ENCODE measurements at regions of chr5 and their contacts with region 1.

Region 1: GRCh38 chr5:82351754-82352145 is 73.6 kb upstream of the RPS23 start:
- DNase-seq: peak; percentile 89
- ATAC-seq: peak; percentile 89
- H3K4me3 ChIP-seq: no peak overlapping the region
- H3K27ac ChIP-seq: no peak overlapping the region
- H3K4me1 ChIP-seq: peaks cover 19% of the 10 kb centered on the region
- H3K27me3 ChIP-seq: no peaks in the 10 kb centered on the region
- CTCF ChIP-seq: peak; percentile 90
- POLR2A ChIP-seq: 0 out of 2 replicates have a peak, but pooled peaks have one; percentile 47
- RAD21 ChIP-seq: peak; percentile 93

Region 2: GRCh38 chr5:81303563-81303962 is 1048.2 kb before region 1 on chr5:
- CTCF ChIA-PET with region 1: no interaction called
- POLR2A ChIA-PET with region 1: no interaction called
- dilution Hi-C with region 1: no loop called
- in situ Hi-C with region 1: no loop called
- intact Hi-C with region 1: no loop called
- DNase-seq: peak; percentile 94
- ATAC-seq: peak; percentile 20
- H3K4me3 ChIP-seq: no peak overlapping the region
- H3K27ac ChIP-seq: no peak overlapping the region
- H3K4me1 ChIP-seq: peaks cover 4% of the 10 kb centered on the region
- H3K27me3 ChIP-seq: no peaks in the 10 kb centered on the region
- CTCF ChIP-seq: no peak
- POLR2A ChIP-seq: no peak
- RAD21 ChIP-seq: no peak

Region 3: DNA sequence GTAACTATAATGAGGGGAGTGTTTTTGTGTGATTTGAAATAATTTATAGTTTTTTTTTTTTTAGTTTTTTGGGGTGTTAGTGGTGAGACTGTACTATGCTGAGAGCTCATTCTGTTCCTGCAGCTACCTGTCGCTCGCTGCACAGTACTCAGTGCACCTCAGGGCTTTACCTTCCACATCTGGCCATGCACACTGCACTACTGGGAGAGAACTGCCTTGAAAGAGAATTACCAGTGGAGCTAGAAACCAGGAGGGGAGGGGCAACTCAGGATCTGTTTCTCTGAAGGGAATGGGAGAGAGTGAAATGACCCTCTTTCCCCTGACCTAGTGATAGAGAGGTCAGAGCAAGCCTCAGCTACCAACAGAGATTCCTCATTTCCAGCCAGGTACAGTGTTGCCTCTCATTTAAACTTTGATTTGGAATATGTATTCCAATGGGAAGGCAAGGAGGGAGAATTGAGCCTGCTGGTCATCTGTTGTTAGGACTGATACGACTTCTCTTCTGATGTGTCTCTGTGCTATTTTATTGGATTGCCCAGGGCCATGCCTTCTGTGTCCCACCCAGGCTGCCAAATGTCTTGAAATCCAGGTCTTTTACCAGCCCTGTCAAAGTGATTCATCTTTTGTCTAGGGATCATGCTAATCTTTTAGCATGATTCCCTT is 371.0 kb before region 1 on chr5:
- CTCF ChIA-PET with region 1: no interaction called
- POLR2A ChIA-PET with region 1: no interaction called
- dilution Hi-C with region 1: no loop called
- in situ Hi-C with region 1: no loop called
- intact Hi-C with region 1: no loop called
- DNase-seq: no peak
- ATAC-seq: no peak
- H3K4me3 ChIP-seq: no peak overlapping the region
- H3K27ac ChIP-seq: no peak overlapping the region
- H3K4me1 ChIP-seq: no peaks in the 10 kb centered on the region
- H3K27me3 ChIP-seq: no peaks in the 10 kb centered on the region
- CTCF ChIP-seq: no peak
- POLR2A ChIP-seq: no peak
- RAD21 ChIP-seq: no peak

Region 4: DNA sequence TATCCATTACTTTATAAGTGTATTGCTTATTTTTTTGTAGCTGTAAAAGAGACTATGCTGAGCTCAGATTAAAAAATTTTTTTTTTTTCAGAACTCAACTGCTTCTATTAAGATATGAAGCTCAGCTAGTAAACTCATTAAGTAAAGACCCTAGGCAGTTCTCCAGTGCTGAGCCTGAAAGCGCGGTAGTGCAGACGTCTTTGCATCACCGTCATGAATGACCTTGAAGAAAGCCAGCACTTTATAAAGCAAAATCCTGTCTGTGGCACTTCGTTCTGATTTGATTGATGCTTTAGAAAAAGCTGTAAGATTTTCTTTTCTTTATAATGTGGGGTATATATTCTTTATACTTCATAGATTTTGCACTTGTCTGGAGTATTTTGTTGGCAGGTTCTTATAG is 274.3 kb before region 1 on chr5:
- CTCF ChIA-PET with region 1: no interaction called
- POLR2A ChIA-PET with region 1: no interaction called
- dilution Hi-C with region 1: no loop called
- in situ Hi-C with region 1: no loop called
- intact Hi-C with region 1: no loop called
- DNase-seq: no peak
- ATAC-seq: no peak
- H3K4me3 ChIP-seq: no peak overlapping the region
- H3K27ac ChIP-seq: no peak overlapping the region
- H3K4me1 ChIP-seq: no peaks in the 10 kb centered on the region
- H3K27me3 ChIP-seq: no peaks in the 10 kb centered on the region
- CTCF ChIP-seq: no peak
- POLR2A ChIP-seq: no peak
- RAD21 ChIP-seq: no peak

Region 5: GRCh38 chr5:82494942-82495341 is 143.2 kb after region 1 on chr5:
- CTCF ChIA-PET with region 1: interaction called, 3 read pairs
- POLR2A ChIA-PET with region 1: no interaction called
- dilution Hi-C with region 1: no loop called
- in situ Hi-C with region 1: loop called (anchors 10 kb)
- intact Hi-C with region 1: loop called (anchors 2 kb)
- DNase-seq: peak; percentile 5
- ATAC-seq: no peak
- H3K4me3 ChIP-seq: no peak overlapping the region
- H3K27ac ChIP-seq: no peak overlapping the region
- H3K4me1 ChIP-seq: no peaks in the 10 kb centered on the region
- H3K27me3 ChIP-seq: peaks cover 4% of the 10 kb centered on the region; the same call in 1 of the 2 replicates
- CTCF ChIP-seq: peak; percentile 38
- POLR2A ChIP-seq: no peak
- RAD21 ChIP-seq: peak; percentile 36

Region 6: GRCh38 chr5:82684165-82684564 is 332.4 kb after region 1 on chr5:
- CTCF ChIA-PET with region 1: no interaction called
- POLR2A ChIA-PET with region 1: no interaction called
- dilution Hi-C with region 1: no loop called
- in situ Hi-C with region 1: no loop called
- intact Hi-C with region 1: no loop called
- DNase-seq: no peak
- ATAC-seq: no peak
- H3K4me3 ChIP-seq: no peak overlapping the region
- H3K27ac ChIP-seq: no peak overlapping the region
- H3K4me1 ChIP-seq: no peaks in the 10 kb centered on the region
- H3K27me3 ChIP-seq: no peaks in the 10 kb centered on the region
- CTCF ChIP-seq: no peak
- POLR2A ChIP-seq: no peak
- RAD21 ChIP-seq: no peak

Region 7: DNA sequence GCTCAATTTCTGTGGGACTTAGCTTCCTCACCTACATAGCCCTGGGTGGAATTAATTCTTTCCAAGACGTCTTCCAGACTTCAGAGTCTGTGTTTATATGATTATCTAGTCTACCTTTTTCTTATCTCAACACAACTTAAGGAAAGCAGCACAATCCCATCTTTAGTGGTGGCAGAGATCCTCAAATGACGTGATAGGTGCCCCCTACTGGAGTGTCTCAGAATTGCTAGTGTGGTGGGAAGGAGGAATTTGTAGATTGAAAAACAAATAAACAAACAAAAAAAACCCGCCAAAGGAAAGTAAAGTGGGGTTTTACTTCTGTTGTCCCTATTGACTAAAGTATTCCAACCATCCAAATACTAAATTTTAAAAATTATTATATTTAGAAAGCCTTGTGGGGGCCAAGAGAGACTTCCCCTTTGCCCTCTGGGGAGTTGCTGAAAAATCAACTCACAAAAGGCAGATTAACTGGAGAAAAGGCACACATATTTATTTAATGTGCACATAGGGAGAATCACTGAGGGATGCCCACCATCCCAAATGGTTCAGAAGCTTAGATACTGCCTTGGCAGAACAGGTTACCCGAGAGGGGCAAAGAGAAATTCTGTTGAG is 442.2 kb after region 1 on chr5:
- CTCF ChIA-PET with region 1: no interaction called
- POLR2A ChIA-PET with region 1: no interaction called
- dilution Hi-C with region 1: no loop called
- in situ Hi-C with region 1: loop called (anchors 25 kb)
- intact Hi-C with region 1: loop called (anchors 2 kb)
- DNase-seq: peak; percentile 20
- ATAC-seq: no peak
- H3K4me3 ChIP-seq: no peak overlapping the region
- H3K27ac ChIP-seq: no peak overlapping the region
- H3K4me1 ChIP-seq: no peaks in the 10 kb centered on the region
- H3K27me3 ChIP-seq: no peaks in the 10 kb centered on the region
- CTCF ChIP-seq: peak; percentile 54
- POLR2A ChIP-seq: no peak
- RAD21 ChIP-seq: peak; percentile 51

Region 8: GRCh38 chr5:83069096-83069799 is 717.5 kb after region 1 on chr5:
- CTCF ChIA-PET with region 1: no interaction called
- POLR2A ChIA-PET with region 1: no interaction called
- dilution Hi-C with region 1: no loop called
- in situ Hi-C with region 1: loop called (anchors 25 kb)
- intact Hi-C with region 1: no loop called
- DNase-seq: peak; percentile 40
- ATAC-seq: peak; percentile 29; the same call in 1 of the 2 replicates
- H3K4me3 ChIP-seq: no peak overlapping the region
- H3K27ac ChIP-seq: no peak overlapping the region
- H3K4me1 ChIP-seq: peaks cover 6% of the 10 kb centered on the region; the same call in 1 of the 2 replicates
- H3K27me3 ChIP-seq: no peaks in the 10 kb centered on the region
- CTCF ChIP-seq: no peak
- POLR2A ChIP-seq: no peak
- RAD21 ChIP-seq: no peak

Region 9: DNA sequence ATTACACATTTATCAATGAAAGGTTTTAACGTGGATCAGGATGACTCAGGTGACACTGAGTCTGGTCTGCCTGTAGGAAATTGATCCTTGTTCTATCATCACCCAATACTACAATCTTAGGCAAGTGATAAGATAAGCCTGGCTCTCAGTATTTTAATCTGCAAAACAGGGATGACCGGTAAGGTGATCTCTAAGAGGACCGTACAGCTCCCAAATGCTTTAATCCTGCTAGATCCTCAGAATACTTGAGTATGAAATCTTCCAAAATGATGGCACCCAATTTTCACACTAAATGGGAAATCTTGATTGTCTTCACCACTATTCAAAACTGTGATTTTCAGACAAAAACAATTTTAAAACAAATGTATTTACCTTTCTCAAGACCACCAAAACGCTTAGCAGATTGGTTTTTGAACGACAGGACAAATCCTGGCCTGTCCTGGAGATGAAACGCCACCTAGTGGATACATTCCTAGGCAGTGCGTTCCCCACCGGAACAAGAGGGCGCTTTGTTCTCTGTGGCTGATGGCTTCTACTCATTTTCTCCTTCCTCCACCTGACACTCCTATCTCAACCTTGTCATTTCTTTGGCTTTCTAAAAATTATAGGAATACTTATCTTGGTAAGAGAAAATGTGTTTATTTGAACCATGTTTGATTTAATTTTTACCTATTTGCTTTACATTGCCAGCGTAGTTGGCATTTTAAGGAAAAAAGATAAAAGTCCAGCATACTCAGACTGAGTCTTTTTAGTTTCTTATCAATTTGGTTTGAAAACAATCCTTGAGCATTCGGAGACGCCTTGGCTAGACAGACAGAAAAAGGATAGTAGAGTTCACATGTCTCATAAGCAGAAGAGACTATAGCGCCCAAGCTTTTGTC is 1078.6 kb after region 1 on chr5:
- CTCF ChIA-PET with region 1: interaction called, 3 read pairs
- POLR2A ChIA-PET with region 1: no interaction called
- dilution Hi-C with region 1: no loop called
- in situ Hi-C with region 1: no loop called
- intact Hi-C with region 1: loop called (anchors 1 kb)
- DNase-seq: peak; percentile 69
- ATAC-seq: peak; percentile 89
- H3K4me3 ChIP-seq: no peak overlapping the region
- H3K27ac ChIP-seq: no peak overlapping the region
- H3K4me1 ChIP-seq: no peaks in the 10 kb centered on the region
- H3K27me3 ChIP-seq: no peaks in the 10 kb centered on the region
- CTCF ChIP-seq: peak; percentile 93
- POLR2A ChIP-seq: no peak
- RAD21 ChIP-seq: peak; percentile 89

Region 10: DNA sequence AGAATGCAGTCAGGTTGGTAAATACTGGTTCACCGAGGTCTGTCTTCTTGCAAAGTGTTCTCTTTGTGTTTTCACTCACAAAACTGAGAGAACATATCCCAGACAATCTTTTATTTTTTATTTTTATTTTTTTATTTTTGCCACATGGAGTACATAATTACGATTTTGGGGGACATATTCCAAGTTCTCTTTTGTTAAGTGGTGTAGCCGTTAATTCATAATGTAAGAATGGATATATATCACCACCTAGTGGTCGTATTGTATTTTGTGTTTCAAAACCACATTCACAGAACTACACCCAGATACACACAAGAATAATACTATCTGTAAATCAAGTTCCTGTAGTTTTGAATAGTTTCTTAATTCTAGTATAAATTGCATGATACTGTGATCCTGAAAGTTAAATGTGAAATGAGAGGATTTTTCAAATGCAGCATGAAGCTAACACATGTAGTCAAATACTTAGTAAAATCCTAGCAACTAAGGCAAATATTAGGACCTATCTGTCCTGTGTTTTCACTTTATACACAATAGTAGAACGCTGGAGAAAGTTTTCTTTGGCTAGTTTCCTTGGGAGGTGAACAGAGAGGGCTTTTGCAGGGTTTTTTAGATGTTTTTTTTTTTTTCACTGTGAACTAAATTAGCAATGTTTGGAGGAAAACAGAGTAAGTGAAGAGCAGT is 1212.5 kb after region 1 on chr5:
- CTCF ChIA-PET with region 1: interaction called, 3 read pairs
- POLR2A ChIA-PET with region 1: no interaction called
- dilution Hi-C with region 1: no loop called
- in situ Hi-C with region 1: loop called (anchors 5 kb)
- intact Hi-C with region 1: loop called (anchors 1 kb)
- DNase-seq: peak; percentile 63
- ATAC-seq: peak; percentile 56; the same call in 1 of the 2 replicates
- H3K4me3 ChIP-seq: no peak overlapping the region
- H3K27ac ChIP-seq: no peak overlapping the region
- H3K4me1 ChIP-seq: peaks cover 9% of the 10 kb centered on the region
- H3K27me3 ChIP-seq: no peaks in the 10 kb centered on the region
- CTCF ChIP-seq: peak; percentile 70
- POLR2A ChIP-seq: no peak
- RAD21 ChIP-seq: peak; percentile 75

Measured in IMR-90 (cell line).